ENCODE measurements at regions of chr4 and their contacts with region 1.

Region 1: DNA sequence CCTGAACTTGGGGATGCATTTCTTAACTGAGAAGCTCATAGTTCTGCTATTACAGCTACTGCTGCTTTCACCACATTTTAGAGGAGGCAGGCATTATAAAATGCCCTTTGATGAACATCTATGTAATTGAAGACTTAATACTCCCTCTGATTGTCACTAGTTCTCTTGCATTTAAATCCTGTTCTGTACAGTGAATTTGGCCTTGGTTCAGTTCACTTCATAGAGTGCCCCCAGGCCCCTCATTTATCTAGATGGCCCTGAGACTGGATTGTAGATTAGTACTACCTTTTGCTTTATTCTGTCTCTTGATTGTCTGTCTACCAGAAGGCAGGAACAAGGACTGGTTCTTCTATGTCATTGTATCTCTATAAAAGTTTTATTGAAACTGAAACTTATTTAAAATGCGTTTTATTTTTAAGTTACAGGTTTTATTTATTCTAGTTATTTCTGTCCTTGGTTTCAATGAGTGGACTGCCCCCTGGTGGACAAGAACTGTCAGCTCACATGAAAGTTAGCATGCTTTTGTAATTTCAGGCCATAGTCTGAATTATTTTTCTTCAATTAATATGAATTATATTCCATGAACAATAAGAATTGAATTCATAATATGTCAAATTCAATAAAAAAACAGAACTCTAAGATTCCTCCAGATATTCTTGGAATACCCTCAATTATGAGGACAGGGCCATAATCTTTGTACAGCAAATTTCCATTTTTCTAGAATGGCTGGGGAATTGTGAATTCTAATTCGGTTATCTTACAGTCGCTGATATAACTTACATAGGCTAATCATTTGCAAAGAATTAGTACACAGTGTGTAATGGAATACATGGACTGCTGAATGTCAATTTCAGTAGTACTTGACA is 47.2 kb upstream of the TMEM33 start:
- DNase-seq: no peak
- ATAC-seq: no peak
- H3K4me3 ChIP-seq: no peak overlapping the region
- H3K27ac ChIP-seq: no peak overlapping the region
- H3K4me1 ChIP-seq: no peaks in the 10 kb centered on the region
- H3K27me3 ChIP-seq: peaks cover 1 to 3% of the 10 kb centered on the region in 2 experiments; a peak in 2 of 4 replicates
- CTCF ChIP-seq: peak; percentile 68 to 77 (median 73)
- EP300 ChIP-seq: no peak
- POLR2A ChIP-seq: no peak
- RAD21 ChIP-seq: peak; percentile 74

Region 2: GRCh38 chr4:41281038-41281634 is 606.9 kb before region 1 on chr4:
- CTCF ChIA-PET with region 1: interaction called, 22 read pairs
- POLR2A ChIA-PET with region 1: no interaction called
- RAD21 ChIA-PET with region 1: interaction called, 3 read pairs
- SMC1A ChIA-PET with region 1: interaction called, 5 read pairs
- in situ Hi-C with region 1: loop called (anchors 5 kb)
- intact Hi-C with region 1: loop called (anchors 2 kb)
- DNase-seq: peak; percentile 48
- ATAC-seq: peak; percentile 99
- H3K4me3 ChIP-seq: no peak overlapping the region
- H3K27ac ChIP-seq: no peak overlapping the region
- H3K4me1 ChIP-seq: no peaks in the 10 kb centered on the region
- H3K27me3 ChIP-seq: no peaks in the 10 kb centered on the region
- CTCF ChIP-seq: peak; percentile 72 to 92 (median 90)
- EP300 ChIP-seq: no peak
- POLR2A ChIP-seq: no peak
- RAD21 ChIP-seq: peak; percentile 97

Region 3: DNA sequence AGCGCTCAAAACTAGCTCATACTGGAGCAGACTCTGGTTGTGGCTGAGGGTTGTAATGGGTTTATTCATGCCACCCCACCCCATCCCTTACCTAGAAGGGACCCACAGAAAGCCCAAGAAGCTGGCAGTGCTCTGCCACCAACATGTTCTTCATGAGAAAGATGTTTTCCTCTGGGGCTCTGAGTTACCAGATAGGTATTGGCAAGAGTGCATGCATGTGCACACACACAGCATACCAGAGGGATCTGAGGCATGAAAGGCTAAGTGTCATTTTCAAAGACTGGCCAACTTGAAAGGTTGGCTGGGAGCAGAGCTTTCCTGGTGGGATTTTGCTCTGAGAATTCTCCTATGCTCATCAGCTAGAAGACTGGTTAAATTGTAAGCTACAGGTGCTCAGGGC is 204.7 kb before region 1 on chr4:
- CTCF ChIA-PET with region 1: interaction called, 13 read pairs
- POLR2A ChIA-PET with region 1: no interaction called
- RAD21 ChIA-PET with region 1: no interaction called
- SMC1A ChIA-PET with region 1: interaction called, 3 read pairs
- in situ Hi-C with region 1: no loop called
- intact Hi-C with region 1: no loop called
- DNase-seq: no peak
- ATAC-seq: no peak
- H3K4me3 ChIP-seq: no peak overlapping the region
- H3K27ac ChIP-seq: no peak overlapping the region
- H3K4me1 ChIP-seq: no peaks in the 10 kb centered on the region
- H3K27me3 ChIP-seq: 0 out of 4 replicates have a peak, but pooled peaks cover 0 to 2% of the 10 kb centered on the region in 2 experiments
- CTCF ChIP-seq: no peak
- EP300 ChIP-seq: no peak
- POLR2A ChIP-seq: no peak
- RAD21 ChIP-seq: no peak

Region 4: DNA sequence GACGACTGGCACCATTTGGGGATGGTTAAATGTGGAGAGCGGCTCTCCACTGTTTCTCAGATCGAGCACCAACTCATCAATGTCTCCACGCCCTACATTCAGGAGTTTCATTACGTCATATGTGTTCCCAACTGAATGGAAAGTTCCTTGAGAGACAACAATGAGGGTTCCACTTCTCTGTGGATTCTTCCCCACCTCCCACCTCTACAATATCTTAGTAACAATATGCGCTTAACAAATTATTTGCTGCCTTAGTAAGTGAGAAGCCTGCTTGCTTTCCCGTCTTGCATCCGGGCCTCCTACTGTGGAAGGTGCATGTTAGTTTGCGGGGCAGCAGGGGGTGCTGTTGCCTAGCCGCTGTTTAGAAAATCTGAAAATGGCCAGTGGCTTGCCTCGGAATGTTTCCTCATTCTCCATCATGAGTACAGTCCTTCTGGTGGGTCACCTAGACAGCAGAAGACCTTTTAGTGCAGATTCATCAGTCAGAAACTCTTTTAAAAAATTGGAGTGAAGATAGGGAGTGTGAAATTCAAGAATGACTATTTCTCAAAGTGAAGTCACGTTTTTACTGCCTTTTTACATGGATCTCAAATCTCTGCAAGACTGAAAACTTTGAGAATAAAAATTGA is 195.2 kb before region 1 on chr4:
- CTCF ChIA-PET with region 1: interaction called, 85 read pairs
- POLR2A ChIA-PET with region 1: interaction called, 3 read pairs
- RAD21 ChIA-PET with region 1: interaction called, 4 read pairs
- SMC1A ChIA-PET with region 1: interaction called, 22 read pairs
- in situ Hi-C with region 1: loop called (anchors 5 kb)
- intact Hi-C with region 1: loop called (anchors 1 kb)
- DNase-seq: no peak
- ATAC-seq: peak; percentile 88
- H3K4me3 ChIP-seq: no peak overlapping the region
- H3K27ac ChIP-seq: no peak overlapping the region
- H3K4me1 ChIP-seq: no peaks in the 10 kb centered on the region
- H3K27me3 ChIP-seq: no peaks in the 10 kb centered on the region
- CTCF ChIP-seq: peak; percentile 88 to 94 (median 89)
- EP300 ChIP-seq: no peak
- POLR2A ChIP-seq: no peak
- RAD21 ChIP-seq: peak; percentile 94

Region 5: DNA sequence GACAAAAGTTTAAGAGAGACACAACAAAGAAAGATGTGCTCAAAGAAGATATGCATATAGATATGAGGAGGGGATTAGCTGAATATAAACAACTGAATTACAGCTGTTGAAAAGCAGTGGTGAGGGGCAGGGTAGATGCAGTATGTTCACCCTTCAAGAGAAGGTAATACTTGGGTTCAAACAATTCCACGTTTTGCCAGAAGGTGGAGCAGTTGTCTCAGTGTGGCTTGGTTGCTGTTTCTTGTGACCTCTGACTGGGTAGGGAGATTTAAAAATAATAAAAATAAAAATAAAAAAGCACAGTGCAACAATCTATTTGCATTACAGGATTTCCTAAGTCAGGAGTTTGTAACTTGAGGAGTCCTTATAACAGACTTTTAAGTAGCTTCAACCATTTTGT is 162.8 kb before region 1 on chr4:
- CTCF ChIA-PET with region 1: interaction called, 10 read pairs
- POLR2A ChIA-PET with region 1: no interaction called
- RAD21 ChIA-PET with region 1: no interaction called
- SMC1A ChIA-PET with region 1: no interaction called
- in situ Hi-C with region 1: no loop called
- intact Hi-C with region 1: no loop called
- DNase-seq: no peak
- ATAC-seq: no peak
- H3K4me3 ChIP-seq: no peak overlapping the region
- H3K27ac ChIP-seq: no peak overlapping the region
- H3K4me1 ChIP-seq: no peaks in the 10 kb centered on the region
- H3K27me3 ChIP-seq: no peaks in the 10 kb centered on the region; a peak in 1 of 4 replicates
- CTCF ChIP-seq: 0 out of 6 replicates have a peak, but pooled peaks of 1 of the 3 experiments have one; percentile 2
- EP300 ChIP-seq: no peak
- POLR2A ChIP-seq: no peak
- RAD21 ChIP-seq: 0 out of 2 replicates have a peak, but pooled peaks have one; percentile 6

Region 6: DNA sequence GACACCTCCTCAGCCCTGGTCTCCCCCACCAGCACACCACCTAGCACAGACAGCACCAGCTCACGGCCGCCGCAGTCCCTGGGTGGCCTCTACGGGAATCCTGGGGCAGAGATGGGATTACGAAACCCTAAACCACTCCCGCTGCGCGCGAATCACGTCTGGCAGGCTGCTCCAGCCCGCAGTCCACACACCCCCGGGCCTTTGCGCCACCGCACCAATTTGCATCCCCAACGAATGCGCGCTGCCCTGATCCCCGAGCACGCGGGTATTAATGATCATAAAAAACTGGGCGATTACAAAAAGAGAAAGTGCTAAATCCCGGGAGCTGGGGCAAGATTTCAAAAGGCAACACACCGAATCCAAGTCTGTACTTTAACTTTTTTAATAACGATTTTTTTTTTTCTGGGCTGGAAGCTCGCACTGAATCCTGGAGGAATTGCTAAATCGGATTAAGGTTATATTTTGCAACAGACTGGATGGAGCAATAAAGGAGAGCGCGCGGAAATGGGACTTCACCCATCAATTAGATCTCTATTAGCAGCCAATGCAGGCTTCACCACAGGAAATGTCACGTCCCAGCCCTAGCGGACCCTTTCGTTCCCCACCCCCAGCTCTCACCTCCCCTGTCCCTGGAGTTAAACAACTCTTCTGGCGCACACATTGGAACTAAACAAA is 22.6 kb before region 1 on chr4:
- CTCF ChIA-PET with region 1: interaction called, 10 read pairs
- POLR2A ChIA-PET with region 1: no interaction called
- RAD21 ChIA-PET with region 1: interaction called, 3 read pairs
- SMC1A ChIA-PET with region 1: no interaction called
- in situ Hi-C with region 1: no loop called
- intact Hi-C with region 1: no loop called
- DNase-seq: no peak
- ATAC-seq: no peak
- H3K4me3 ChIP-seq: no peak overlapping the region
- H3K27ac ChIP-seq: no peak overlapping the region
- H3K4me1 ChIP-seq: peaks cover 4% of the 10 kb centered on the region
- H3K27me3 ChIP-seq: peaks cover 10 to 14% of the 10 kb centered on the region in 2 experiments
- CTCF ChIP-seq: no peak
- EP300 ChIP-seq: no peak
- POLR2A ChIP-seq: no peak
- RAD21 ChIP-seq: no peak

Region 7: DNA sequence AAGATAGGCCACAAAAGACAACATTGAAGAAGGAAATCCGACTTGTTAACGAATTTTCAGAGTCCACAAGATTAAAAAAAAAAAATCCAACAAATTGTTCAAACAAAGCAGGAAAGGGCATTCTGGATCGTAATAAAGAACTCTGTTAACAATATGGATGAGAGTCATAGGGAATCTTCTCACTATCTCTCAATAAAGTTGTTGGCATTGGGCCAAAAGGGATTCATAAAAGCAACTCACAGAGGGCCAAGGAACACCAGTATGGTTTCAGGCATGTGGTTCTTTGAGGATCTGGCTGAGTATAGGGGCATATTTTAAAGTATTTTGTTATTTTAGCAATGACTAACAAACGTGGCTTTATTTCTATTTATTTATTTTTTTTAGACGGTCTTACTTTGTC is 558.8 kb after region 1 on chr4:
- CTCF ChIA-PET with region 1: no interaction called
- POLR2A ChIA-PET with region 1: no interaction called
- RAD21 ChIA-PET with region 1: no interaction called
- SMC1A ChIA-PET with region 1: no interaction called
- in situ Hi-C with region 1: no loop called
- intact Hi-C with region 1: no loop called
- DNase-seq: no peak
- ATAC-seq: no peak
- H3K4me3 ChIP-seq: no peak overlapping the region
- H3K27ac ChIP-seq: no peak overlapping the region
- H3K4me1 ChIP-seq: no peaks in the 10 kb centered on the region
- H3K27me3 ChIP-seq: no peaks in the 10 kb centered on the region
- CTCF ChIP-seq: no peak
- EP300 ChIP-seq: no peak
- POLR2A ChIP-seq: no peak
- RAD21 ChIP-seq: no peak